ENCODE measurements at regions of chr20 and their contacts with region 1.

Region 1: GRCh38 chr20:35146920-35147574 is at the start of gene EDEM2:
- DNase-seq: peak; percentile 95
- H3K4me3 Mint-ChIP-seq: peak within 1 kb of the TSS; percentile 94
- H3K27ac Mint-ChIP-seq: peak within 1 kb of the TSS; percentile 95
- H3K4me1 Mint-ChIP-seq: peaks cover 11% of the 10 kb centered on the region
- H3K27me3 Mint-ChIP-seq: no peaks in the 10 kb centered on the region
- CTCF ChIP-seq: no peak
- total RNA-seq, gene EDEM2: 23.6 and 30.2 TPM in 2 replicates

Region 2: GRCh38 chr20:34825530-34826362 is 321.3 kb before region 1 on chr20 and contains the start of gene NCOA6:
- CTCF ChIA-PET with region 1: no interaction called
- POLR2A ChIA-PET with region 1: interaction called, 11 read pairs
- intact Hi-C with region 1: no loop called
- DNase-seq: peak; percentile 78
- H3K4me3 Mint-ChIP-seq: peak within 1 kb of the TSS; percentile 97
- H3K27ac Mint-ChIP-seq: peak within 1 kb of the TSS; percentile 88
- H3K4me1 Mint-ChIP-seq: peaks cover 24% of the 10 kb centered on the region
- H3K27me3 Mint-ChIP-seq: peaks cover 22% of the 10 kb centered on the region
- CTCF ChIP-seq: no peak
- total RNA-seq, gene NCOA6: 25.7 and 27.9 TPM in 2 replicates

Region 3: GRCh38 chr20:35166242-35166830 is 19.3 kb after region 1 on chr20:
- CTCF ChIA-PET with region 1: interaction called, 9 read pairs
- POLR2A ChIA-PET with region 1: interaction called, 41 read pairs
- intact Hi-C with region 1: loop called (anchors 1 kb)
- DNase-seq: no peak
- H3K4me3 Mint-ChIP-seq: no peak overlapping the region
- H3K27ac Mint-ChIP-seq: peak overlapping the region; percentile 46
- H3K4me1 Mint-ChIP-seq: peaks cover 1% of the 10 kb centered on the region
- H3K27me3 Mint-ChIP-seq: peaks cover 11% of the 10 kb centered on the region
- CTCF ChIP-seq: no peak

Region 4: GRCh38 chr20:35200255-35200654 is 53.2 kb after region 1 on chr20:
- CTCF ChIA-PET with region 1: interaction called, 20 read pairs
- POLR2A ChIA-PET with region 1: interaction called, 18 read pairs
- intact Hi-C with region 1: no loop called
- DNase-seq: peak; percentile 80
- H3K4me3 Mint-ChIP-seq: no peak overlapping the region
- H3K27ac Mint-ChIP-seq: peak overlapping the region; percentile 4
- H3K4me1 Mint-ChIP-seq: peaks cover 9% of the 10 kb centered on the region
- H3K27me3 Mint-ChIP-seq: no peaks in the 10 kb centered on the region
- CTCF ChIP-seq: no peak

Region 5: GRCh38 chr20:35215066-35215956 is 68.3 kb after region 1 on chr20:
- CTCF ChIA-PET with region 1: interaction called, 182 read pairs
- POLR2A ChIA-PET with region 1: interaction called, 66 read pairs
- intact Hi-C with region 1: no loop called
- DNase-seq: peak; percentile 25
- H3K4me3 Mint-ChIP-seq: no peak overlapping the region
- H3K27ac Mint-ChIP-seq: no peak overlapping the region
- H3K4me1 Mint-ChIP-seq: peaks cover 7% of the 10 kb centered on the region
- H3K27me3 Mint-ChIP-seq: peaks cover 24% of the 10 kb centered on the region
- CTCF ChIP-seq: no peak

Region 6: DNA sequence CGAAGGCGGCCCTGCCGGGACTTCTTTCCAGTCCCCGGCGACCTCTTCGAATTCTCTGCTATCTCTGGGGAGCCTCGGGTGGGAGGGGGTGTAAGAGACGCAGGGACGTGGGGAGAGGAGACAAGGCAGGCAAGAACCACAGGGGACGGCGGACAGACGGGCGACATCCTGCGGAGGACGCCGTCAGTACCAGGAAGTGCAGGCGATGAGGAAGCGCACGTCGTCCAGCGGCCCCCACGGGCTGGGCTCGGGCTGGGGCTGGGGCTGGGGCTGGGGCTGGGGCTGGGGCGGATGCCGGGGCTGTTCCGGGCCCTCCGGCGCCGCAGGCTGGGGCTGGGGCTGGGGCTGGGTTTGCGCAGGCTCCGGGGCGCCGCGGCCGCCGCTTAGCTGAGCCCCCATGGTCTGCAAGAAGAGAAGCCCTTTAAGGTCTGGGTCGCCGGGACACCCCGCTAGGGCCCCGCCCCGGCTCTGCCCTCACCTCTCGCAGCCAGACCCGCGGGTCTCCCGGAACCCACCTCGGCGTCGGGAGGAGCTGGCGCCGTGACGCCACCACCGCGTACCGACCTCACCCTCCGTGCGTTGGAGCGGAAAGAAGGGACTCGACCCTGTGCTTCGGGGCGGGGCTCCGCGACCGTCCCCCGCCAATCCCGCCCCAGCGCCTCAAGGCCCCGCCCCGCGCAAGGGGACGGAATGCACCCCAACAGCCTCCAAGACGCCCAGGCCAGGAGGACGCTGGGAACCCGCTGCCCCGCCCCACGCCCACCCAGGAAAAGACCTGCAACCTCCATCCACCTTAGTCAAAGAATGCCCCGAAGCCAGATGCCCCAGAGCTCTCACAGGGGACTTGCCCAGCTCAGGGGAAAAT is 130.7 kb after region 1 on chr20 and contains the start of gene MMP24OS:
- CTCF ChIA-PET with region 1: interaction called, 4 read pairs
- POLR2A ChIA-PET with region 1: interaction called, 26 read pairs
- intact Hi-C with region 1: no loop called
- DNase-seq: peak; percentile 86
- H3K4me3 Mint-ChIP-seq: peak within 1 kb of the TSS; percentile 98
- H3K27ac Mint-ChIP-seq: peak within 1 kb of the TSS; percentile 87
- H3K4me1 Mint-ChIP-seq: peaks cover 26% of the 10 kb centered on the region
- H3K27me3 Mint-ChIP-seq: no peaks in the 10 kb centered on the region
- CTCF ChIP-seq: no peak
- total RNA-seq, gene MMP24OS: 43.2 and 52.2 TPM in 2 replicates